ENCODE measurements at regions of chr6 and their contacts with region 1.

Region 1: GRCh38 chr6:111259089-111259831 is 172.0 kb downstream of the SLC16A10 start:
- DNase-seq: peak; percentile 99
- H3K4me3 Mint-ChIP-seq: peak overlapping the region; percentile 76
- H3K27ac Mint-ChIP-seq: peak overlapping the region; percentile 73
- H3K4me1 Mint-ChIP-seq: peaks cover 31% of the 10 kb centered on the region
- H3K27me3 Mint-ChIP-seq: peaks cover 18% of the 10 kb centered on the region

Region 2: DNA sequence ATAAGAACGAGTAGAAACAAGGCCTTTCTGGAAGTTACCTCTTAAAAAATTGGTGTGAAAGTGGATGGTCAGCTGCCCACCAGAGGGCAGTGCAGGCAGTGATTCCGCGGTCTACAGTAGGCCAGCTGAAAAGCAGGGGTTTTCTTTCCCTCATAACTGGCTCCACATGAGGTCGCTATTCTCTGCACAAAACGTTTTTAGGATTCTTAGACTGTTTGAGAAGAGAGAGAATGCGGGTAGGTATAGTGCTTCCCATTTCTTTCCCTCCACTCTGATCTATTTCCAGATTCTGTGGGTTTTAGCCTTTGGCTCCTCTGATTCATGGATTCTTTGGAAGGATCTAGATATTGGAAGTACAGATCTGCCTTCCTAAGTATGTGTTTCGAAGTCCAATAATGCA is 1554.0 kb before region 1 on chr6:
- CTCF ChIA-PET with region 1: no interaction called
- POLR2A ChIA-PET with region 1: no interaction called
- DNase-seq: peak; percentile 81
- H3K4me3 Mint-ChIP-seq: no peak overlapping the region
- H3K27ac Mint-ChIP-seq: no peak overlapping the region
- H3K4me1 Mint-ChIP-seq: peaks cover 7% of the 10 kb centered on the region
- H3K27me3 Mint-ChIP-seq: no peaks in the 10 kb centered on the region

Region 3: DNA sequence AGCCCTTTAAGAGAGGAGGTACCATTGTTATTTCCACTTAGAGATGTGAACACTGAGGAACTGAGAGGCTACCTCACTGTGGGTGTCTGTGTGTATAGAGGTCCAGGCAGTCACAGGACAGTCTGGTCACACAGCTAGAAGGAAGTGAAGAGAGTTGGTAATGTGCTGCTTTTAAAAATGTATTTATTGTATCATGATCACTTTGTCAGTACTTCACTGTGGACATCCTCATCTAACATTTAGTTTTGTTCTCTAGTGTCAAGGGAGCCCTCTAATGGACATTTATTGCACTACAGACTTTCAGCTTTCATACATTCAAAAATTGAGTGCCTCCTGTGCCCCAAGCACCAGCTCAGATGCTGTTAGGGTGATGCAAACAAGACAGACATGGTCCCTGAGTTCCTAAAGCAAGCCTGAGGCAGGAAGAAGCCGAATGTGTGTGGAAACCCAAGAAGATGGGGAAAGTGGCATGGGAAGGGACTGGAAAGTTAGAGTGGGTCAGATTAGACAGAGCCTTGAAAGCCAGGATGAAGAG is 49.0 kb before region 1 on chr6:
- CTCF ChIA-PET with region 1: no interaction called
- POLR2A ChIA-PET with region 1: no interaction called
- DNase-seq: peak; percentile 20
- H3K4me3 Mint-ChIP-seq: no peak overlapping the region
- H3K27ac Mint-ChIP-seq: no peak overlapping the region
- H3K4me1 Mint-ChIP-seq: no peaks in the 10 kb centered on the region
- H3K27me3 Mint-ChIP-seq: no peaks in the 10 kb centered on the region

Region 4: GRCh38 chr6:111297776-111298175 is 38.5 kb after region 1 on chr6:
- CTCF ChIA-PET with region 1: interaction called, 13 read pairs
- POLR2A ChIA-PET with region 1: interaction called, 3 read pairs
- DNase-seq: no peak
- H3K4me3 Mint-ChIP-seq: no peak overlapping the region
- H3K27ac Mint-ChIP-seq: no peak overlapping the region
- H3K4me1 Mint-ChIP-seq: peaks cover 18% of the 10 kb centered on the region
- H3K27me3 Mint-ChIP-seq: no peaks in the 10 kb centered on the region

Region 5: GRCh38 chr6:111478749-111479148 is 219.5 kb after region 1 on chr6:
- CTCF ChIA-PET with region 1: interaction called, 101 read pairs
- POLR2A ChIA-PET with region 1: interaction called, 40 read pairs
- DNase-seq: no peak
- H3K4me3 Mint-ChIP-seq: no peak overlapping the region
- H3K27ac Mint-ChIP-seq: no peak overlapping the region
- H3K4me1 Mint-ChIP-seq: peaks cover 35% of the 10 kb centered on the region
- H3K27me3 Mint-ChIP-seq: no peaks in the 10 kb centered on the region

Region 6: DNA sequence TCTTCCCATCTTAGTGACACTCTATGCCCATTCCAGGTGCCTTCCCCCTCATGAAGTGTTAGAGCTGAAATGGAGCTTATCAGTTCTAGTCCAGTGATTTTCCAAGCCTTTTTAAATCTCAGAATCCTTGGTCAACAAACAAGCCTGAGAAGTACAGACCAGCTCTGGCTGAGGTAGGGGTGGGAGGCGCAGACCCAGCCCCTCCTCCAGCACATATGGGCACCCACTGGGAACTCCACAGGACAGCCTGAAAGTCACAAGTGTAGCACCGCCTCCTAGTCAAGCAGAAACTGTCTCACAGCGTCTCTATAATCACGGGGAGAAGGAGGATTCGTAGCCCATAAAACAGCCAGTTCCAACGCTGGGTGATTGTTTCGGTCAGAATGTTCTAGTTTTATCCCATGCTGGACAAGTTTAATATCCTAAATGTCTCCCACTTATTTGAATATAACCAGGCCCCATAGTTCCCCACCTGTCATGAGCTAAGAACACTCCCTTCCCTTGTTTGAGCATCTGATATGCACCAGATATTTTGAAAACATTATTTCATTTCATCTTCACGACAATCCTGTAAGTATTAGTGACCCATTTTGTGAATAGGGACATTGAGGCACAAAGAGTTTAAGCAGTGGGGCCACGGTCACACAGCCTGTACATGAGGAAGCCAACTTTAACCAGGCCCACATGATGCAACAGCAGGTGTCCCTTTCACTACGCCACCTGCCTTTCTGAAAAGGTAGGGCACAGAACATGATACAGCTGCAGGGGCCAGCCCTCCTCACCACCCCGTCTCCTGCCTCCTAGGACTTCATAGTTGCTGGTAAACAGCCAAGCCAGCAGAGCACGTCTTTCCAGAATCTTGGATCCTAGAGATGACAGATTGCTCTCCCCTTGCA is 306.3 kb after region 1 on chr6:
- CTCF ChIA-PET with region 1: interaction called, 16 read pairs
- POLR2A ChIA-PET with region 1: no interaction called
- DNase-seq: no peak
- H3K4me3 Mint-ChIP-seq: no peak overlapping the region
- H3K27ac Mint-ChIP-seq: peak overlapping the region; percentile 58
- H3K4me1 Mint-ChIP-seq: peaks cover 50% of the 10 kb centered on the region
- H3K27me3 Mint-ChIP-seq: no peaks in the 10 kb centered on the region

Region 7: GRCh38 chr6:111642463-111643158 is 383.4 kb after region 1 on chr6:
- CTCF ChIA-PET with region 1: interaction called, 23 read pairs
- POLR2A ChIA-PET with region 1: interaction called, 4 read pairs
- DNase-seq: peak; percentile 49
- H3K4me3 Mint-ChIP-seq: no peak overlapping the region
- H3K27ac Mint-ChIP-seq: no peak overlapping the region
- H3K4me1 Mint-ChIP-seq: no peaks in the 10 kb centered on the region
- H3K27me3 Mint-ChIP-seq: no peaks in the 10 kb centered on the region

Measured in activated CD4-positive, alpha-beta memory T cell treated with anti-CD3 and anti-CD28 coated beads, Interleukin-2, amount 10 ng/mL, durations not matched to agents 7 days and 5 days (primary cell).